Activated naive CD4-positive, alpha-beta T cell treated with anti-CD3 and anti-CD28 coated beads for 36 hours (primary cell): ENCODE measurements at regions of chr20 and their contacts with region 1.

Region 1: DNA sequence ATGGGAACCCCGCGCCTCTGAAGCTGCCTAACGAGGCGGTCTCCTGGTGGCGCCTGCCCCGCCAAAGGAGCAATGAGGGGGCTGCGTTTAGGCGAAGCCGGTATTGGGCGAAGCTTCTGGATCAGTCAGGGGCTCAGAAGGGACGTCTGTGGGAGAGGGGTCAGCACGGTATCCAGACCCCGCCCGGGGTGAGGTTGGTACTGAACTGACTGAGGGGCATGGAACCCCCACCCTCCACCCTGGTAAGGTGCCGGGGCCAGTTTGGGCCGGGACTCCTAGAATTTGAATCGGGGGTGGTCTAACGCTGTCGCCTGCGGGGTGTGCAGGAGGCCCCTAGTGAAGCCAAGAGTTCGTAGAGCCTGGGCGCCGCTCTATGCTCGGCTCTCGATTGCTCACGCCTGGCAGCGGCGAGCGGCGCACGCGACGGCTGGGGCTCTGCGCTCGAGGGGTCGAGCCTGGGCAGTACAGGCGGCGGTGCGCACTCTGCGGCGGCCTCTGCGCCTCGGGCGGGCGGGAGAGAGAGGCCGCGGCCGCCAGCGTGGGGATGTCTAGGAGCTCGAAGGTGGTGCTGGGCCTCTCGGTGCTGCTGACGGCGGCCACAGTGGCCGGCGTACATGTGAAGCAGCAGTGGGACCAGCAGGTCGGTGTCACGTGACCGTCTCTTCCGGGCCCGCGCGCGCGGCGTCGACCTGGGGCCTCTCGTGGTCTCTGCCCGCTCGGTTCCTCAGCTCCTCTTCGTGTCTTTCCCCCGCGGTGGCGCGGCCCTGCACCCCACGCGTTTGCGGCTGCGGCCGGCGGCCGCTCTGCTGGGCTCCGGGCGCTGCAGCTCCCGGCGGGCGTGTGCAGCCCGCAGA is at the starts of genes KAT14 and PET117:
- DNase-seq: peak; percentile 91
- H3K4me3 Mint-ChIP-seq: peak within 1 kb of the TSS; percentile 75
- H3K27ac Mint-ChIP-seq: peak within 1 kb of the TSS; percentile 77
- H3K4me1 Mint-ChIP-seq: peaks cover 30% of the 10 kb centered on the region
- H3K27me3 Mint-ChIP-seq: no peaks in the 10 kb centered on the region
- total RNA-seq, gene KAT14: 10.3 to 12.9 TPM
- total RNA-seq, gene PET117: 16.7 to 17.9 TPM

Region 2: DNA sequence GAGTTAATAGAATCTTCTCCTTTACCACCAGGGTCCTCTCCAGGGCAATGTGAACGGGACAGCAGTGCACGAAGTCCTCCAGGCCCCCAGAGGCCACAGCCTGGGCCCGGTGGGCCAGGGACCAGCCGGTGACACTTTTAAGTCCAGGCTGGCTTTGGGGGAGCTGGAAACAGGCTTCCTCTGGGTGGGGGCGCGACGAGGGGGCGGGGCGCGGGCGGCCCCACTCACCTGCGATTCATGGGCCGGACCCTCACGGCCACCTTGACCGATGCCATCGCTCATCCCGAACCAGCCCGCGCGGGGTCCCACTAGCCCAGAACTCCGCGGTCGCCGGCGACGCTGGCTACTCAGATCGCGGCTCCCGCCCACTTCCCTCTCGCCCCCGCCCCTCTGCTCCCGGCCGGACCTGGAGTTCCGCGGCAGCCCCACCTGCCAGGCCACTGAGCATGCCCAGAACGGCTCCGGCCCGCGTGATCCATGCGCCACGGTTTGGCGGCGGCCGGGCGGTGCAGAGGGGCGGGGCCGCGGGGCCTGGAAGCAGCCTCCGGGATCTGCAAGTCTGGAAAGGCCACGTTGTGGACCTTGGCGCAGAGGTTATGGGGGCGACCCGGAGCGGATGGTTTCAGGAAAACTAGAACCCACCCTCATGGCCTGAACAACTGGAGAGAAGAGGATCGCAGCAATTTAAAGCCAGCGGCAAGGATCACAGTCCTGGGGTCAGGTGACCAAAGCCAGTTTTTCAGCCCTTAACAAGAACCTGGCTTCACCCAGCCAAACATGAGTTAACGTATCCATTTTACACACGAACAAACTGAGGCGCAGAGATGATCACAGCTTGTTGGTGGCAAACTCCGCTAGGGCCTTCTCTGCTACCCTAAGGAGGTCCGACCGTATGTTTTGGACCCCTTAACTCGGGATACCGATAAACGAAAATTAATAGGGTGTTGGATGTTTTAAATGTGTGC is 1564.4 kb before region 1 on chr20 and contains the start of gene KIF16B:
- CTCF ChIA-PET with region 1: no interaction called
- intact Hi-C with region 1: loop called (anchors 5 kb)
- DNase-seq: peak; percentile 89
- H3K4me3 Mint-ChIP-seq: peak within 1 kb of the TSS; percentile 88
- H3K27ac Mint-ChIP-seq: peak within 1 kb of the TSS; percentile 79
- H3K4me1 Mint-ChIP-seq: peaks cover 35% of the 10 kb centered on the region
- H3K27me3 Mint-ChIP-seq: no peaks in the 10 kb centered on the region
- total RNA-seq, gene KIF16B: 5.1 to 5.6 TPM

Region 3: GRCh38 chr20:16729565-16730456 is 1407.8 kb before region 1 on chr20 and contains the start of gene SNRPB2:
- CTCF ChIA-PET with region 1: no interaction called
- intact Hi-C with region 1: loop called (anchors 10 kb)
- DNase-seq: peak; percentile 95
- H3K4me3 Mint-ChIP-seq: peak within 1 kb of the TSS; percentile 99
- H3K27ac Mint-ChIP-seq: peak within 1 kb of the TSS; percentile 98
- H3K4me1 Mint-ChIP-seq: peaks cover 45% of the 10 kb centered on the region
- H3K27me3 Mint-ChIP-seq: peaks cover 6% of the 10 kb centered on the region
- total RNA-seq, gene SNRPB2: 93.1 to 99.8 TPM

Region 4: GRCh38 chr20:18176318-18176785 is 38.7 kb after region 1 on chr20:
- CTCF ChIA-PET with region 1: no interaction called
- intact Hi-C with region 1: no loop called
- DNase-seq: no peak
- H3K4me3 Mint-ChIP-seq: no peak overlapping the region
- H3K27ac Mint-ChIP-seq: peak overlapping the region; percentile 23
- H3K4me1 Mint-ChIP-seq: no peaks in the 10 kb centered on the region
- H3K27me3 Mint-ChIP-seq: no peaks in the 10 kb centered on the region

Region 5: GRCh38 chr20:18224968-18225568 is 87.4 kb after region 1 on chr20:
- CTCF ChIA-PET with region 1: no interaction called
- intact Hi-C with region 1: no loop called
- DNase-seq: no peak
- H3K4me3 Mint-ChIP-seq: no peak overlapping the region
- H3K27ac Mint-ChIP-seq: no peak overlapping the region
- H3K4me1 Mint-ChIP-seq: no peaks in the 10 kb centered on the region
- H3K27me3 Mint-ChIP-seq: peaks cover 9% of the 10 kb centered on the region

Region 6: DNA sequence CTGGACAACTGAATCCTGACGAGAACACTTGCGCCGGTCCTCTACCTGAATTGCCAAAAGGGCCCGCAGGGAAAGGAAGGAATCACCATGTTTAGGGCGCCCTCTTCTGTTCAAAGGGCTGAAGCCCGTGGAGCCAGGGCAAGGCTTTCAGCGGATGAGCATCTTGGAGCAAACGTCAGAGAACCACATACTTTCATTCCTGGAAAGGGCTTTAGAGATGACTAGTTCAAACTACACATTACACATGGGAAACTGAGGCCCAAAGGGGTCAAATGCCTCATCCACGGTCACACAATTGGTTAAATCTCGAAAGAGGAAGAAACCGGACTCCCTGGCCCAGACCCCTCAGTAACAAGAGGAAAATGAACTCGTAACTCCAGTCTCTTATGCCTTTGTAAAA is 139.2 kb after region 1 on chr20:
- CTCF ChIA-PET with region 1: no interaction called
- intact Hi-C with region 1: loop called (anchors 2 kb)
- DNase-seq: peak; percentile 80
- H3K4me3 Mint-ChIP-seq: no peak overlapping the region
- H3K27ac Mint-ChIP-seq: no peak overlapping the region
- H3K4me1 Mint-ChIP-seq: no peaks in the 10 kb centered on the region
- H3K27me3 Mint-ChIP-seq: peaks cover 37% of the 10 kb centered on the region

Region 7: GRCh38 chr20:18466894-18467730 is 329.5 kb after region 1 on chr20 and contains the starts of genes DZANK1 and POLR3F:
- CTCF ChIA-PET with region 1: no interaction called
- intact Hi-C with region 1: loop called (anchors 1 kb)
- DNase-seq: peak; percentile 94
- H3K4me3 Mint-ChIP-seq: peak within 1 kb of the TSS; percentile 92
- H3K27ac Mint-ChIP-seq: peak within 1 kb of the TSS; percentile 84
- H3K4me1 Mint-ChIP-seq: peaks cover 32% of the 10 kb centered on the region
- H3K27me3 Mint-ChIP-seq: no peaks in the 10 kb centered on the region
- total RNA-seq, gene DZANK1: 0.79 to 0.94 TPM
- total RNA-seq, gene POLR3F: 7.0 to 8.3 TPM

Region 8: DNA sequence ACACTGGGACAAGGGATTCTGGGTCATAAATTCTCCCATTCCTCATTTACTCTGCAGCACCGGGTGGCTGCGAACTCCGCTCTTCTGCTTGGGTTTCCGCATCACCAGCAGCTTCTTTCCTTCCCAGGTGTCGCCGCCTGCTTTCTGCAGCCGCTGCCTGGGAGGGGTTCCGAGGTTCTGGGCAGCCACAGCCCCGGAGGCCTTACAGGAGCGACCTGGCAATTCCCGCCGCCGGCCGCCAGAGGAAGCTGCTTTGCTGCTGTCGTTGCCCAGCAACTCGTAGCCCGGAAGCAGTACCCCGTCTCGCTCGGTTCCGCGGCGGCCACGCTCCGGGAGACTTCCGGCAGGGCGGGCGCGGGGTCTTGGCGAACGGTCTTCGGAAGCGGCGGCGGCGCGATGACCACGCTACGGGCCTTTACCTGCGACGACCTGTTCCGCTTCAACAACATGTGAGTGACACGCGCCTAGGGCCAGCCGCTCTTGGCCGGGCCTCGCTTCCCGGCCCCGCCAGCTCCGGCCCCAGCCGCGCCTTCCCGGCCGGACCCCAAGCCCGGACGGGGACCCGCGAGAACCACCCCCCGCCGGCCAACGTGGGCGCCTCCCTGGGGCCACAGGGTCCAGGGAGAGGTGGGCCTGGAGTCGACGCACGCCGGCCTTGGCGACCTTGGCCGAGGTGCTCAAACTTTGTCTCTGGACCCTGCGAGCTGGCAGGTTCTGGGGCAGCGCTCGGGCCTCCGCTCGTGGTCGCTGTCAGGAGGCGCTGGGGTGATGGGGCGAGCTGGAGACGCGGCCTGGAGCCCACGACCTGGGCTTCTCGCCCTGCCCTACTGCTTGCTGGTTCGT is 1879.6 kb after region 1 on chr20 and contains the start of gene NAA20:
- CTCF ChIA-PET with region 1: no interaction called
- intact Hi-C with region 1: loop called (anchors 10 kb)
- DNase-seq: peak; percentile 93
- H3K4me3 Mint-ChIP-seq: peak within 1 kb of the TSS; percentile 88
- H3K27ac Mint-ChIP-seq: peak within 1 kb of the TSS; percentile 90
- H3K4me1 Mint-ChIP-seq: peaks cover 54% of the 10 kb centered on the region
- H3K27me3 Mint-ChIP-seq: no peaks in the 10 kb centered on the region
- total RNA-seq, gene NAA20: 59.5 to 65.5 TPM